Ascending aorta (tissue), 2 donors: ENCODE measurements at regions of chr9 and their contacts with region 1.

Region 1: GRCh38 chr9:6479959-6480358 is 67.0 kb downstream of the UHRF2 start:
- DNase-seq: no peak
- H3K4me3 ChIP-seq: no peak overlapping the region
- H3K27ac ChIP-seq: no peak overlapping the region
- H3K4me1 ChIP-seq: no peaks in the 10 kb centered on the region
- H3K27me3 ChIP-seq: no peaks in the 10 kb centered on the region
- CTCF ChIP-seq: no peak

Region 2: GRCh38 chr9:6367128-6367890 is 112.7 kb before region 1 on chr9:
- intact Hi-C with region 1: loop called (anchors 5 kb)
- DNase-seq: no peak
- H3K4me3 ChIP-seq: no peak overlapping the region
- H3K27ac ChIP-seq: no peak overlapping the region
- H3K4me1 ChIP-seq: no peaks in the 10 kb centered on the region
- H3K27me3 ChIP-seq: no peaks in the 10 kb centered on the region
- CTCF ChIP-seq: no peak